ENCODE measurements at regions of chr3 and their contacts with region 1.

Region 1: DNA sequence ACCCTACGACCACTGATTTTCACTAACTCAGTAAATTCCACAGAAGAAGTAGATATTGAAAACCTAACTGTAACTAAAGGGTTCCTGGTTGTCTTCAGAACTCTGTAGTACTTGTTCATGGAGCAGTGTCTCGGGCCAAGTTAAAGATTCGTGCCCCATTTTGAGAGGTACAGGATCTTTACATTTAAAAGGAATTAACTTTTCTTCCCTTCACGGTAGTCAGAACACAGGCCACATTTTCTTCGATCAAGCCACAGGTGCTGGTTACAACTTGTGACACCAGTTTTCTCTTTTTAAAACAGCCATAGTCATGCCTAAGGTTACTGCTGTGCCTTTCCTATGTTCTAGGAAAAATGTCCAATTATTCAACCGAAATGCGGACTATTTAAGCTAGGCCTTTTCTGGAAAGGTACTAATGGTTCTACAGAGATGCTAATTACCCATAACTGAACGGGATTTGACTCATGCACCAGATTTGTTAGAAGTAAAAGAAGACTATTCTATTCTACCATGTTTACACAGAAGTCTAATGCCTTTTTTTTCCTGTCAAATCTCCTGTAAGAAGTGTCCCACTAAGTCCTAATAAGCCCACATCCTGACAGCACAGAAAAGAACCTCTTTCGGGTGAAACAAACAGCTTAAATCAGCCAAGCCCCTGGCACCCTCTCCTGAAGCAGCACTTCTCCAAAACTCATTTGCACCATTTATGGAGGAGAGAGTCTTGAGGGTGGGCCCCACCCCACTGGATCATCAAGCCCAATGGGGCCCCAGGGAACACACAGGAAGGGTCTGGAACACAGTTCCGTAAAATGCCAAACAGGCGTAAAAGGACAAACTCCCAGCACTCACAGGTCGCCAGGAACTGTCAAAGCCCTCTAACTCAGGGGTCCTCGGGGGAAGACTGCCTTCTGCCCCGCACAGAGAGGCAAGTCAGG is 1.9 kb downstream of the LRIG1 start:
- DNase-seq: peak in 1 of 3 donors; percentile 32
- H3K4me3 ChIP-seq: peak overlapping the region in 6 of 7 experiments; percentile 14 to 89 (median 81)
- H3K27ac ChIP-seq: no peak overlapping the region
- H3K4me1 ChIP-seq: peaks cover 13 to 55% (median 22%) of the 10 kb centered on the region in 4 experiments
- H3K27me3 ChIP-seq: peaks cover 0 to 11% (median 0%) of the 10 kb centered on the region in 5 experiments

Region 2: DNA sequence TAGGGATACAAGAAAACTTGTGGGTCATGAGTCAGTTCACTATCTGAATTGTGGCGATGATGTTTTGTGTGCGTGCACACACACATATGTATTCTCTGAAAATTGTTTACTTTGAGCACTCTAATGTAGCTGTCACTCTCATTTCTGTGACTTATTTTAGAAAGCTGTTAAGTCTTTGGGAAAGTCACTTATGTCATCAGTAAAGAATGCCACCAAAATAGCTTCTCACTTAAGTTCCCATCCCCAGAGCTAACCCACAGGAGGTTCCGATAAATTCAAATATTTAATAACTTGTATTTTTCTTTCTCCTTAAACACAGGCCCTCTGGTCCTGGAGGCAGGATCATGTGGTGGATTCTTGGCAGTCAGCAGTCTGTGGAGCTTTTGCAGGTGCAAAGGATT is 136.4 kb before region 1 on chr3:
- CTCF ChIA-PET with region 1: no interaction called
- POLR2A ChIA-PET with region 1: no interaction called
- DNase-seq: no peak
- H3K4me3 ChIP-seq: no peak overlapping the region
- H3K27ac ChIP-seq: no peak overlapping the region
- H3K4me1 ChIP-seq: no peaks in the 10 kb centered on the region
- H3K27me3 ChIP-seq: no peaks in the 10 kb centered on the region

Region 3: DNA sequence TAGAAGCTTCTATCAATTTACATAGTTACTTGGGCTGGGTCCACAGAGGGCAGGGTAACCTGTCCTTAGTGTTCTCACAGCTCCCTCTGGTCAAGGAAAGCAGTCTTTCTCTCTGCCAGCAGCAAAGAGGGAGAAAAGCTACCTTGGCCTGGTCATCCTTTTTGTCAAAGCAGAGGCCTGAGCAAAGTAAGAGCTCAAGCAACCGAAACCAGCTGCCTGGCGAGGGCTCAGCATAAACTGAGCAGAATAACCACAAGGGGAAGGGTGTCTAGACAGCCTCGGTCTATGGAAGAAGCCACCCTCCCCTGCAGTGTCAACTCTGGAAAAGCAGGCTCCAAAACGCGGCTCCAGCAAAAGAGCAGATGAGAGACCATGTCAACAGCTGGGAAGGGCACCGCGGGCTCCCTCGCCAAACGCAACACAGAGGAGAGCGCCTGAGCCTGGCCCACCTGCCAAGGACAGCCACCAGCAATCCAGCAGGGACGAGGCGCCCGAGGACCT is 15.5 kb before region 1 on chr3:
- CTCF ChIA-PET with region 1: interaction called, 40 read pairs
- POLR2A ChIA-PET with region 1: interaction called, 8 read pairs
- DNase-seq: peak in 2 of 3 donors; percentile 47 to 72
- H3K4me3 ChIP-seq: no peak overlapping the region
- H3K27ac ChIP-seq: no peak overlapping the region
- H3K4me1 ChIP-seq: peaks cover 18 to 49% (median 29%) of the 10 kb centered on the region in 4 experiments
- H3K27me3 ChIP-seq: no peaks in the 10 kb centered on the region

Region 4: GRCh38 chr3:66797889-66798560 is 299.1 kb after region 1 on chr3:
- CTCF ChIA-PET with region 1: no interaction called
- POLR2A ChIA-PET with region 1: no interaction called
- DNase-seq: no peak
- H3K4me3 ChIP-seq: peak overlapping the region in 4 of 7 experiments; percentile 11 to 52 (median 33)
- H3K27ac ChIP-seq: no peak overlapping the region
- H3K4me1 ChIP-seq: peaks cover 0 to 7% (median 5%) of the 10 kb centered on the region in 4 experiments
- H3K27me3 ChIP-seq: peaks cover 0 to 8% (median 3%) of the 10 kb centered on the region in 5 experiments

Measured in common myeloid progenitor, CD34-positive (primary cell).